ENCODE measurements at regions of chr2 and their contacts with region 1.

Region 1: DNA sequence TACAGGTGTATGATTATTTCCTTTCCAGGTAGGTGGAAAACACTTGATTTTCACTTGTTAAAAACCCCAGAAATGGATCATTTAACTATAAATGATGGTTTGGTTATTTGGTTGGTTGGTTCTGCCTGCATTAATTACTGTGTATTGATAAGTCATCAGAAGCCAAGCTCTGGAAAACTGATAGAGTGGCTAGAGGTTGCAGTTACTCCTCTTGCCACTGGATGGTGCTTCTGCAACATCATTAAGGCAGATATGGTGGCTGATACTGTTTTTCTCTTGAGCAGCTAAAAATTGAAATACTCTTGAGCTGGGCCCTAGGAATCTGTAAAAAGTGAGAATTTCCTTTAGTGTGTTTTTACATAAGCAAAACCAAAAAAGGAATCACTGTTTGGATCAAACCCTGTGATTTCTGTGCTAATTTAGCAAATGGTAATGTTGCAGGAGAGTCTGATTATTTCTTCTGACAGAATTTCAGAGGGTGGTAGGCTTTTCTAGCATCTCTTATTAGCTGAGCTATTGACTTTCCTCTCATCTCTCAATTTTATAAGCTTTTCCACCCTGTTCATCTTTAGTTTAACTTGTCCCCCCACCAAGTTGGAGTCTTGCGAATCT is 54.3 kb downstream of the RAB10 start:
- DNase-seq: no peak

Region 2: GRCh38 chr2:25991965-25992364 is 96.2 kb before region 1 on chr2:
- intact Hi-C with region 1: loop called (anchors 5 kb)
- DNase-seq: no peak

Region 3: GRCh38 chr2:26122630-26123029 is 34.5 kb after region 1 on chr2:
- intact Hi-C with region 1: no loop called
- DNase-seq: no peak